ENCODE measurements at regions of chr21 and their contacts with region 1.

Region 1: DNA sequence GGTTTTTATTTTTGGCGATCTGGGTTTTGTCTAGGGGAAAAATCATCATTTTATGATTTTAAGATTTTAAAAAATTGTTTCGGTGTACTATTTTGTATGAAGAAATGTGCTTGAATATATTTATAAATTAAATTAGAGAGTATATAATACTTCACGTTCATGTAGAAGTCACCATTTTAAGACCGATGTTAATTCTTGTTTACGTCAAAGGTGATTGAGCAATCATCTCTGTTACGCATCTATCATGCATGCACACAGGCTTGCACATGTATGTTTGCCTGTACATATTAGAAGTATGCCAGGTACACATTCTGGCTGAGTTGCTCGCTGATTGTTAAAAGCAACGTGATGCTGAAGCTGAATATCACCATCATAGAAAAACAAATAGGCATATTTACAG is 54.7 kb downstream of the DYRK1A start:
- DNase-seq: no peak
- ATAC-seq: no peak
- H3K4me3 Mint-ChIP-seq: no peak overlapping the region
- H3K27ac Mint-ChIP-seq: no peak overlapping the region
- H3K4me1 Mint-ChIP-seq: peaks cover 68% of the 10 kb centered on the region
- H3K27me3 Mint-ChIP-seq: no peaks in the 10 kb centered on the region

Region 2: DNA sequence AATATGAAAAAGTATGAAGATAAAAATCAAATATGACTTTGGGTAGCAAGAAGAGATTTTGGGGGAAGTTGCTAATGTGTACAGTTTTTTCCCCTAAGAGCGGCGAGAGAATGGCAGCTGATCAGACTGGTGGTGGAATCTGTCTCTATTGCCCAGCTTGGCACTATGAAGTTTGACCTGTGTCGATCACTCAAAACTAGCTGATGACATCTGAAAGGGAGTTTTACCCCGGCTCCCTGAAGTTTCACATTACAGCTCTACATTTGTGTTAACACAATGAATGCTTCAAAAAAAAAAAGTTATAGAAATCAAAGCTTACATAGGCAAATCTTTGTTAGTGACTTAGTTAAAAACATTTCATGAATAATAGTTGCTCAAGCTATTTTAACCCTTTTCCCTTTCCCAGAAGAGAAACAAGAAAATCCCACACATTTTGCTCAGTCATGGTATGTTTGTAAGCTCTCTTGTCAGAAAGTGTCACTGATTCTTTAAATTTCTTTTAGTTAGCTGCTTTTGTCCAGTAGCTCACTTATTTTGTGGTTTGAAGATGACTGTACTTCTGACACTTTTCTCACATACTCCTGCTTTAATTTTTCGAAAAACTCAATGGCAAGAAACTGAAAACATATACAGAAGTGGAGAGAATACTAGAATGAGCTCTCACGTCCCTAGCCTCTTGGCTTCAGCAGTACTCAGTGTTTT is 13.4 kb before region 1 on chr21:
- CTCF ChIA-PET with region 1: no interaction called
- POLR2A ChIA-PET with region 1: interaction called, 3 read pairs
- intact Hi-C with region 1: loop called in 1 of 2 experiments (anchors 2 kb)
- DNase-seq: no peak
- ATAC-seq: peak; percentile 57
- H3K4me3 Mint-ChIP-seq: peak overlapping the region; percentile 44
- H3K27ac Mint-ChIP-seq: peak overlapping the region; percentile 75
- H3K4me1 Mint-ChIP-seq: peaks cover 85% of the 10 kb centered on the region
- H3K27me3 Mint-ChIP-seq: no peaks in the 10 kb centered on the region